Panc1 (cell line): ENCODE measurements at regions of chr2 and their contacts with region 1.

Region 1: DNA sequence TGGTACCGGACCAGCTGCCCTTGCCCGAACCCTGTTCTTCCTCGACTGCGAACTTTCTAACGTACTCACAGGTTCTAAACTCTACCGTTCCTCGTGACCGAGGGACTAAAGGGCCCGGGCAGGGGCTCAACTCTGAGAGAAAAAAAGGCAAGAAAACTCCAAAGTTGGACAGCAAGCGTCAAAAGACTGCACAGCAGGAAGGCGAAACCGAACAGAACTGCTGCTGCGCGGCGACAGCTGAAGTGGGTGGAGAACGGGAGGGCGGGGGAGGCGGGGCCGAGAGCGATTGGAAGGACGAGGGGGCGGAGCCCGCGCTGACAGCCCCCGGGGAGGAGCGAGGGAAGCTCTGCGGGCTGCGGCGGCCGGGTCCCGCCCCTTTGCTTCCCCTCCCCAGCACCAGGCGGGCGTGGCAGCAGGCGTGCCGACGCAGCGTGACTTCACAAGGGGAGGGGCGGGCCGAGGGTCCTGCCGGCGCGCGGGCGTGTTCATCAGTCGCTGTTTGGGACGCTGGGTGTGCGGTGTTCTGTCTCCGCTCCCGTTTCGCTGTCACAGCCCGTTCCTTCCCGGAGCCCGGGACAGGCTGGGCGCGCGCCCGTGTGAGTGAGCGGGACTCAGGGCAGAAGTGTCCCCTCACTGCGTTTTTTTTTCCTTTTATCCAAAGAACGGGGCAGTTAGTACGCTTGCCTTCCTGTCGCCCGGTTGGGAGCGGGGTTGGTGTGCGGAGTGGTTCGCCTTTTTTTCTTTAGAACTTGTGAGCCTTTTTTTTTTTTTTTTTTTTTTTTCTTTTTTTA is at the start of gene NABP1:
- DNase-seq: no peak
- ATAC-seq: peak; percentile 98
- H3K4me3 ChIP-seq: peak within 1 kb of the TSS; percentile 93 to 94
- H3K27ac ChIP-seq: peak within 1 kb of the TSS; percentile 93
- H3K4me1 ChIP-seq: peaks cover 13% of the 10 kb centered on the region
- H3K27me3 ChIP-seq: 0 out of 2 replicates have a peak, but pooled peaks cover 2% of the 10 kb centered on the region
- CTCF ChIP-seq: no peak
- total RNA-seq, gene NABP1: 38.7 TPM

Region 2: GRCh38 chr2:191386938-191387536 is 290.8 kb before region 1 on chr2:
- CTCF ChIA-PET with region 1: no interaction called
- POLR2A ChIA-PET with region 1: no interaction called
- in situ Hi-C with region 1: no loop called
- intact Hi-C with region 1: no loop called
- DNase-seq: no peak
- ATAC-seq: no peak
- H3K4me3 ChIP-seq: no peak overlapping the region
- H3K27ac ChIP-seq: no peak overlapping the region
- H3K4me1 ChIP-seq: no peaks in the 10 kb centered on the region
- H3K27me3 ChIP-seq: no peaks in the 10 kb centered on the region
- CTCF ChIP-seq: no peak

Region 3: GRCh38 chr2:191521608-191522208 is 156.1 kb before region 1 on chr2:
- CTCF ChIA-PET with region 1: no interaction called
- POLR2A ChIA-PET with region 1: no interaction called
- in situ Hi-C with region 1: no loop called
- intact Hi-C with region 1: no loop called
- DNase-seq: peak; percentile 51
- ATAC-seq: no peak
- H3K4me3 ChIP-seq: no peak overlapping the region
- H3K27ac ChIP-seq: no peak overlapping the region
- H3K4me1 ChIP-seq: no peaks in the 10 kb centered on the region
- H3K27me3 ChIP-seq: no peaks in the 10 kb centered on the region; the same call in 1 of the 2 replicates
- CTCF ChIP-seq: peak; percentile 81; the same call in 1 of the 2 replicates

Region 4: DNA sequence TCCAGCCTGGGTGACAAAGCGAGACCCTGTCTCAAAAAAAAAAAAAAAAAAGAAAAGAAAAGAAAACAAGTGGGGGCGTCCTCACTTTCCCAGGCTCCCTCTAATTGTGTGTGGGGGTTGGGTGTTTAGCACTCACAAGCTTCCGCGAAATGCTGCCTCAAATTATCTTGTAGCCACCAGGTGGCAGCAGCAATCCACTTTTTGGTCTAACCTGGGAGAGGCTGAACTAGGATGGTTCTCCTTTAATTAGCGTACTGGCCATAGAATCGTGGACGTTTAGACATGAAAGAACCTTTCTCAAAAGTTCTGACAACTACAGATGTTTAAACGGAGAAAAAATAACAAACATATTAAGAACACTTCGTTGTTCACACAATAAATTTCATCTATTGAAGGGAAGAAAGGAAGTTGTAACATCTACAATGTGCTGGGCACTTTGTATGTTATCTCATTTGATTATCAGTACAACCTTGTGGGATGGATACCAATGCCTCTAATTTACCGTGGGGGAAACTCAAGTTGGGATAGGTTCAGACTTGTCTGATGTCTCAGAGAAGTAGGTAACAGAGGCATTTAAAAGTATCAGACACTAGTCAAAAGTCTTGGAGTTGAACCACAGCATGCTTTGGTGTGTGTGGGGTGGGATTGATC is 122.6 kb before region 1 on chr2:
- CTCF ChIA-PET with region 1: interaction called, 6 read pairs
- POLR2A ChIA-PET with region 1: no interaction called
- in situ Hi-C with region 1: loop called (anchors 25 kb)
- intact Hi-C with region 1: no loop called
- DNase-seq: peak; percentile 73
- ATAC-seq: peak; percentile 93
- H3K4me3 ChIP-seq: peak overlapping the region; percentile 10 to 41; a peak in 3 of 4 replicates
- H3K27ac ChIP-seq: no peak overlapping the region
- H3K4me1 ChIP-seq: peaks cover 6% of the 10 kb centered on the region; the same call in 1 of the 2 replicates
- H3K27me3 ChIP-seq: peaks cover 4% of the 10 kb centered on the region
- CTCF ChIP-seq: peak; percentile 84